ENCODE measurements at regions of chr1 and their contacts with region 1.

Region 1: DNA sequence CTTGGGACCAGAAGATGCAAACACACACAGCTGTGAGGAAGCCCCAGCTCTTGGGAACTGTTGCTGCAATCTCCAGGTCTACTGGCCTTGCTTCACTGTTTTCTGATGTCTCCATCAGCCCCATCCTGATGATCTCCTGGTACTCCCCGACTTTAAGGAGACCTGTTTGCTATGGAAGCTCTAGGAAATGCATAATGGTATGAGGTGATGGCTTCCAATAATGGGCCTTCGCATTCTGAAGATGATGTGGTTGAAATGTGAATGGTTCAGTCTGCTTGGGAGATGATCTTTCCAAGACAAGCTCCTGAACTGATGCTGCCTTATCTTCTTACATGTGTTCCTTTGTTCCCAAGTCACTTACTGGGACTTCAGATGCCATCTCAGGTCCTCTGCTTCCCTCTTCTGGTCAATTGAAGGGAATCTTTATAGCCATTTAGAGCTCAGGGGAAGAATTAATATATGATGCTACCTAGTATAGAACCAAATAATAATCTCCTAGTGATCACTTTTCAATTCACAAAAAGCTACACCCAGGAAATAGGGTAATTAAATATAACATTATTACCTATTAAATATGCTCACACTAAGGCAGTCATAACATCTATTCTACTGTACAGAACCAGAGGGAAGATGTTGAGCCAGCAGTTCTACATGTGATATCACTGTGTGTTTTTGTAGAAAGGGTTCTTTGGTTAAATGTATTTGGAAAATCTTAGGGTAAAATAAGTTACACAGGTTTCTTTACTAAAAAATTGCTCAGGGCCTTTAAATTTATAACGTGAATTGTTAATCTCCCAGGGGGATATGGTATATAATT is 73.9 kb upstream of the VTCN1 start:
- DNase-seq: peak in 3 of 7 donors; percentile 11 to 23 (median 21)
- H3K4me3 ChIP-seq: no peak overlapping the region
- H3K27ac ChIP-seq: no peak overlapping the region
- H3K4me1 ChIP-seq: no peaks in the 10 kb centered on the region
- H3K27me3 ChIP-seq: no peaks in the 10 kb centered on the region
- CTCF ChIP-seq: peak in 5 of 6 experiments; percentile 46 to 64 (median 58)
- POLR2A ChIP-seq: no peak

Region 2: GRCh38 chr1:117121776-117122697 is 162.6 kb before region 1 on chr1:
- intact Hi-C with region 1: loop called in 1 of 2 experiments (anchors 10 kb)
- DNase-seq: peak; percentile 96 to 99 (median 97)
- H3K4me3 ChIP-seq: peak overlapping the region; percentile 13 to 74 (median 56)
- H3K27ac ChIP-seq: peak overlapping the region; percentile 78 to 96 (median 93)
- H3K4me1 ChIP-seq: peaks cover 5 to 14% of the 10 kb centered on the region in 2 donors
- H3K27me3 ChIP-seq: no peaks in the 10 kb centered on the region
- CTCF ChIP-seq: peak; percentile 43 to 76 (median 62)
- POLR2A ChIP-seq: no peak

Region 3: GRCh38 chr1:117136749-117137148 is 147.9 kb before region 1 on chr1:
- intact Hi-C with region 1: no loop called
- DNase-seq: no peak
- H3K4me3 ChIP-seq: no peak overlapping the region
- H3K27ac ChIP-seq: no peak overlapping the region
- H3K4me1 ChIP-seq: no peaks in the 10 kb centered on the region
- H3K27me3 ChIP-seq: no peaks in the 10 kb centered on the region
- CTCF ChIP-seq: no peak
- POLR2A ChIP-seq: no peak

Region 4: GRCh38 chr1:117147856-117148588 is 136.6 kb before region 1 on chr1:
- intact Hi-C with region 1: no loop called
- DNase-seq: no peak
- H3K4me3 ChIP-seq: no peak overlapping the region
- H3K27ac ChIP-seq: no peak overlapping the region
- H3K4me1 ChIP-seq: no peaks in the 10 kb centered on the region
- H3K27me3 ChIP-seq: no peaks in the 10 kb centered on the region
- CTCF ChIP-seq: no peak
- POLR2A ChIP-seq: no peak

Region 5: DNA sequence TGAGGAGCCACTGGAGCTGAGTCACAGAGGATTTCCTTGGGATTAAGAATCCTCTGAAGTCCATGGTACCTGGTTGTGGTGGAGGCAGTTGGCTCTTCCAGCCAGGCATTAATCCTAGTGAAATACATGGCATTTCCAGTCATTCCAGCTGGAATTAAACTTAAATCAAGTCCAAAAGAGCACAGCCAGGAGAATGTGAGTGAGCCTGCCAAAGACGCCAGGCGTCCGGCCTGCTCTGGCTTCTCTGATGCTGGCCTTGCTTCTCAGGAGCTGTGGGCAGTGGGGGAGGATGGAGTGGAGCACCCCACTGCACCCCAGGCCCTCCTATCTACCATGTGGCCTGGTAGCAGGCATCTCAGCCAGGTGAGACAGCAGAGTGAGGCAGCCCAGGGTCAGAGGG is 297.8 kb after region 1 on chr1:
- intact Hi-C with region 1: no loop called
- DNase-seq: no peak
- H3K4me3 ChIP-seq: no peak overlapping the region
- H3K27ac ChIP-seq: no peak overlapping the region
- H3K4me1 ChIP-seq: no peaks in the 10 kb centered on the region
- H3K27me3 ChIP-seq: no peaks in the 10 kb centered on the region
- CTCF ChIP-seq: no peak
- POLR2A ChIP-seq: no peak

Measured in adrenal gland (tissue), 19 donors.